ENCODE measurements at regions of chr9 and their contacts with region 1.

Region 1: GRCh38 chr9:127503947-127504782 is 52.9 kb downstream of the LRSAM1 start:
- DNase-seq: peak; percentile 81 to 91 (median 87)
- H3K4me3 ChIP-seq: no peak overlapping the region
- H3K27ac ChIP-seq: no peak overlapping the region
- H3K4me1 ChIP-seq: no peaks in the 10 kb centered on the region
- H3K27me3 ChIP-seq: no peaks in the 10 kb centered on the region

Region 2: DNA sequence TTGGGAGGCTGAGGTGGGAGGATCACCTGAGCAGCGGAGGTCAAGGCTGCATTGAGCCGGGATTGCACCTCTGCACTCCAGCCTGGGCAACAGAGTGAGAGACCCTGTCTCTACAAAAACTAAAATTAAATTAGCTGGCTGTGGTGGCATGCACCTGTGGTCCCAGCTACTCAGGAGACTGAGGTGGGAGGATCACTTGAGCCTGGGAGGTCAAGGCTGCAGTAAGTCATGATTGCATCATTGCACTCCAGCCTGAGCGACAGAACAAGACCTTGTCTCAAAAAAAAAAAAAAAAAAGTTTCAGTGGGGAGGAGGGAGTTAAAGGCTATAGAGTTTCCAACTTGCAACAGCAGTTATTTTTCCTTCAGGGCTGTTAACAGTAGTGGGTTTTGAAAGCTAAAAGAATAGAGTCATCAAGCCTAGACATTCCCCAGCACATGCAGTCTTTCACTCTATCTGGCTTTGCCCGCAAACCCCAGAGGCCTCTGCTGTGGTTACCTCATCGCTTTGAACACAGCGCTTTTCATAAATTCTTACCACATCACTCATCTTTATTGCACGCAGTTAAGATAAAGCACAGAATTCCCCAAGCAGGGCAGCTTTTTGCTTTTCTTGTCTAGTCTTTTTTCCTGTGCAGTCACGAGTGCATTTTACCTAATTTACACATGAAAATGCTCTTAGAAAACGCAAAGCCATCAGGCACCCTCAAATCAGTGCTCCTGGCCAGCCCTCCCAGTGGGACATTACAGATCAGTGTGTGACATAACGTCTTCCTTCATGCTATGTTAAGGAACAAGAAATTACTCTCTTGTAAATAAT is 115.9 kb before region 1 on chr9:
- CTCF ChIA-PET with region 1: no interaction called
- POLR2A ChIA-PET with region 1: no interaction called
- DNase-seq: peak; percentile 74 to 91 (median 90)
- H3K4me3 ChIP-seq: no peak overlapping the region
- H3K27ac ChIP-seq: no peak overlapping the region
- H3K4me1 ChIP-seq: peaks cover 5 to 36% (median 20%) of the 10 kb centered on the region in 4 experiments
- H3K27me3 ChIP-seq: peaks cover 3 to 36% (median 5%) of the 10 kb centered on the region in 5 experiments

Region 3: GRCh38 chr9:127525401-127526187 is 21.4 kb after region 1 on chr9:
- CTCF ChIA-PET with region 1: interaction called, 13 read pairs
- POLR2A ChIA-PET with region 1: no interaction called
- DNase-seq: peak; percentile 14 to 51 (median 45)
- H3K4me3 ChIP-seq: no peak overlapping the region
- H3K27ac ChIP-seq: no peak overlapping the region
- H3K4me1 ChIP-seq: peaks cover 0 to 7% (median 3%) of the 10 kb centered on the region in 4 experiments
- H3K27me3 ChIP-seq: no peaks in the 10 kb centered on the region

Region 4: GRCh38 chr9:127578955-127579853 is 75.0 kb after region 1 on chr9:
- CTCF ChIA-PET with region 1: interaction called, 139 read pairs
- POLR2A ChIA-PET with region 1: no interaction called
- DNase-seq: peak; percentile 83 to 96 (median 95)
- H3K4me3 ChIP-seq: peak overlapping the region in 4 of 7 experiments; percentile 37 to 58 (median 49)
- H3K27ac ChIP-seq: peak overlapping the region in 1 of 2 experiments; percentile 56
- H3K4me1 ChIP-seq: peaks cover 3 to 55% (median 24%) of the 10 kb centered on the region in 4 experiments
- H3K27me3 ChIP-seq: no peaks in the 10 kb centered on the region

Region 5: GRCh38 chr9:127595611-127596010 is 91.4 kb after region 1 on chr9:
- CTCF ChIA-PET with region 1: interaction called, 139 read pairs
- POLR2A ChIA-PET with region 1: no interaction called
- DNase-seq: peak in 2 of 3 donors; percentile 13 to 15
- H3K4me3 ChIP-seq: no peak overlapping the region
- H3K27ac ChIP-seq: no peak overlapping the region
- H3K4me1 ChIP-seq: peaks cover 0 to 5% (median 3%) of the 10 kb centered on the region in 4 experiments
- H3K27me3 ChIP-seq: no peaks in the 10 kb centered on the region

Region 6: GRCh38 chr9:127734747-127735529 is 230.8 kb after region 1 on chr9 and contains the start of gene TOR2A:
- CTCF ChIA-PET with region 1: interaction called, 13 read pairs
- POLR2A ChIA-PET with region 1: no interaction called
- DNase-seq: peak; percentile 98 to 99 (median 99)
- H3K4me3 ChIP-seq: peak within 1 kb of the TSS; percentile 53 to 87 (median 71)
- H3K27ac ChIP-seq: peak within 1 kb of the TSS; percentile 87 to 88
- H3K4me1 ChIP-seq: peaks cover 0 to 22% (median 15%) of the 10 kb centered on the region in 4 experiments
- H3K27me3 ChIP-seq: no peaks in the 10 kb centered on the region

Measured in common myeloid progenitor, CD34-positive (primary cell).